Activated T-helper 1 cell treated with anti-CD3 and anti-CD28 coated beads, Interleukin-12 subunit alpha, Interleukin-12 subunit beta, Interleukin-2, Interleukin-4 antibody, amounts not matched to agents 30 ng/mL and 10 ng/mL and 1 ng/mL, durations not matched to agents 14 hours and 24 hours and 36 hours (primary cell): ENCODE measurements at regions of chr1 and their contacts with region 1.

Region 1: DNA sequence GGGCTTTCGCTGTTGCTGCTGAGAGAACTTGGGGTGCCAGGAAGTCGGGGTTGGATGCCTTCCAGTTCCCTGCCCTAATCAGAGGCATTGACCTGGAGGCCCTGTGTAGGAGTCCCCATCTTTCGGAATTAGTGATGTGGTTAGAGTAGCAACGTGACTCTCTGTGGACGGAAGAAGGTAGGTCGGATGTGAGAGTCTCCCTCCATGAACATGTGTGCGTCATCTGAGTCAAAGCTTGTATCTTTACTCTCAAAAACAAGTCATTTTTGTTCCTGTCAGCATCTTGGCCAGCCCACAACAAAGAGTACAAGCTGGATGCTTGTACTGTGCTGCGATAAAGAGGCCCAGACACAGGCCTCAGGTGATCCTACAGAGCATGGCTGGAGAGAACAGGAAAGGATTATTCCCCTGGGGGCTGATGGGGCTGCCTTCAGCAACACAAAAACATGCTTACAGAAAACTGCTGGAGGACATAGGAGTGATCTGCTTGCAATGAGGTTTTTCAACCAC is 31.0 kb upstream of the IL10 start:
- DNase-seq: peak; percentile 81
- H3K4me3 Mint-ChIP-seq: peak overlapping the region; percentile 20
- H3K27ac Mint-ChIP-seq: peak overlapping the region; percentile 83
- H3K4me1 Mint-ChIP-seq: peaks cover 87% of the 10 kb centered on the region
- H3K27me3 Mint-ChIP-seq: peaks cover 30% of the 10 kb centered on the region

Region 2: DNA sequence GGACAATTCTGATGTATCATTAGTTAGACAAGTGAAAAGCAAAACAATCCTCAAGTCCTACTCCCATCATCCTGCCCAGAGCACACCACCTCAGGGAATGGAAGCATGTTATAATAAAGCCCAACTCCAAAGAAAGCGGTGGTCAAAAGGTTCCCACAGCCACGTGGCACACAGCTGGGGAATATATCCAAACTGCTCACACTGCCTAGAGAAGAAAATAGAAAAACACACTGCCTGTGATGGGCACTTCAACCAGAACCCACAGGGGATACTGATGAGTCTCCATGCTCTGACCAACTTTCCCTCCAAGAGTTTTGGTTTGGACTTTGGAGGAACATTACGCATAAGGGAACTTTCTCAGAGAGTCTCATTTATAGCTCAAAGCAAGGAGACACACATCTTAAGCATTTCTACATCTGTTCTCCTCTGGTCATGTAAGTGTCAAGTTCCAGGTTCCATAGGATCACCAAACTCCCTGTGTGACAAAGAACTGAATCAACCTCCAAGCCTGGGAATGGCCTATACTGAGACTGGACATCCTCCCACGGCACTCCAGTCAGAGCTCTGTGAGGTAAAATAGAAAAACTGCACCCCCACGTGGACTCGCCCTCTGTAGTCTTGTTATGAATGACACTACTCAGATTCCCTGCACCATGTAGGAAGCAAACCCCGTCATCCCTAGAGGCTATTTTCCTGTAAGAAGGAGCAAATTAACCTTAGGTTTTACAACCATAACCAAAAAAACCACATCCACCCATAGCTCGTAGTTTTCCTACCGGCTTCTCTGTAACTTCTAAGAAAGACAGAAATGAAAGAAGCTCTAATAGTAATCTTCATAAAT is 1604.0 kb before region 1 on chr1:
- intact Hi-C with region 1: loop called (anchors 1 kb)
- DNase-seq: peak; percentile 29
- H3K4me3 Mint-ChIP-seq: peak overlapping the region; percentile 63
- H3K27ac Mint-ChIP-seq: peak overlapping the region; percentile 94
- H3K4me1 Mint-ChIP-seq: peaks cover 82% of the 10 kb centered on the region
- H3K27me3 Mint-ChIP-seq: no peaks in the 10 kb centered on the region

Region 3: DNA sequence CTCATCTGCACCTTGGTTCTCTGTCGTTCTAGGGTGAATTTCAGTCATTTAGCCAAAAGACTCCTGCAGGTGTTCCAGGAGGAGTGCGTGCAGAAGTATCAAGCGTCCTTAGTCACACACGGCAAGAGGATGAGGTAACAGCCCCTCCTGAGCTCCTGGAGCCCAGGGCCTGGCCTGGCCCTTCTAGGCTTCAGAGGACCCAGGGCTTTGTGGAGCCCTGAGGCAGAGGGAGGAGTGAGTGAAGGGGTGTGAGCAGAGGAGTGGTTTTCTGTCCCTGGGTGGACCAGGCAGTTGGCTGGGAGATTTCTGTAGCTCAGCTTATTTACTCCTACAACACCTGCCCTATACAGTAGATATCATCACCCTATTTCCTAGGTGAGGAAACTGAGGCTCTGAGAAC is 311.7 kb before region 1 on chr1:
- intact Hi-C with region 1: no loop called
- DNase-seq: no peak
- H3K4me3 Mint-ChIP-seq: no peak overlapping the region
- H3K27ac Mint-ChIP-seq: no peak overlapping the region
- H3K4me1 Mint-ChIP-seq: peaks cover 24% of the 10 kb centered on the region
- H3K27me3 Mint-ChIP-seq: no peaks in the 10 kb centered on the region

Region 4: DNA sequence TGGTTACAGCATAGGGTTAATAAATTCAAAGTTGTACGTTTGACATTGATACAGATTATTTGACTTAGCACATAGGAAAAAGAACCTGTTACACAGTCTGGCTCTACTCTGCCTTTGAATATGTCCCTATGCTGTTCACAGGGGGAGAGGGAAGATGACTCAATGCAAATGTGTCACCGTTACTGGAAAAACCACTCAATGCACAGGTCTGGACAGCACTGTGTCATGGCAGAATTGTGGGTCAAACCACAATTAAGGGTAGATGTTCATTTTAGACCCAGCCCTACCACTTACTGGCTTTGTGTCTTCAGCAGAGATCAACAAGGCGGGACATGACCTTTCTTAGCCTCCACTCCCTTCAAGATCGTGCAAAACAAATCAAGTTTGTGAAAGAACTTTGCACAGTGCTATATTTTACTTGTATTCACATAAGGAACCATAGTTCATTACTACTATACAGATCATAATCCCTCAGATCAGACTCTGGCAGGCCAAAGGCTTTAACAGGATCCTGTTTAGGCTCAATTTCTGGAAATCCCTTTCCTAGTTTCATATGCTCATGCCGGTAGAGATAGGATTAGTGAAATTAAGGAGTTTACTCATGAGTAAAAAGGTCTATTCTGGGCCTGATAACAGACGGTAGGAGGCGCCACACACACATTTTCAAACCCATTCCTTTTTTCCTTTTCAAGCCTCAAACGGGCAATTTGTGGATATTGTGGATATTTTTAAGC is 213.1 kb before region 1 on chr1:
- intact Hi-C with region 1: loop called (anchors 2 kb)
- DNase-seq: peak; percentile 70
- H3K4me3 Mint-ChIP-seq: peak overlapping the region; percentile 65
- H3K27ac Mint-ChIP-seq: peak overlapping the region; percentile 95
- H3K4me1 Mint-ChIP-seq: peaks cover 87% of the 10 kb centered on the region
- H3K27me3 Mint-ChIP-seq: no peaks in the 10 kb centered on the region

Region 5: GRCh38 chr1:206766251-206766856 is 36.9 kb before region 1 on chr1:
- intact Hi-C with region 1: loop called (anchors 1 kb)
- DNase-seq: peak; percentile 64
- H3K4me3 Mint-ChIP-seq: peak overlapping the region; percentile 29
- H3K27ac Mint-ChIP-seq: no peak overlapping the region
- H3K4me1 Mint-ChIP-seq: peaks cover 74% of the 10 kb centered on the region
- H3K27me3 Mint-ChIP-seq: peaks cover 34% of the 10 kb centered on the region

Region 6: GRCh38 chr1:206778031-206778430 is 25.2 kb before region 1 on chr1:
- intact Hi-C with region 1: no loop called
- DNase-seq: no peak
- H3K4me3 Mint-ChIP-seq: no peak overlapping the region
- H3K27ac Mint-ChIP-seq: no peak overlapping the region
- H3K4me1 Mint-ChIP-seq: peaks cover 21% of the 10 kb centered on the region
- H3K27me3 Mint-ChIP-seq: peaks cover 31% of the 10 kb centered on the region

Region 7: DNA sequence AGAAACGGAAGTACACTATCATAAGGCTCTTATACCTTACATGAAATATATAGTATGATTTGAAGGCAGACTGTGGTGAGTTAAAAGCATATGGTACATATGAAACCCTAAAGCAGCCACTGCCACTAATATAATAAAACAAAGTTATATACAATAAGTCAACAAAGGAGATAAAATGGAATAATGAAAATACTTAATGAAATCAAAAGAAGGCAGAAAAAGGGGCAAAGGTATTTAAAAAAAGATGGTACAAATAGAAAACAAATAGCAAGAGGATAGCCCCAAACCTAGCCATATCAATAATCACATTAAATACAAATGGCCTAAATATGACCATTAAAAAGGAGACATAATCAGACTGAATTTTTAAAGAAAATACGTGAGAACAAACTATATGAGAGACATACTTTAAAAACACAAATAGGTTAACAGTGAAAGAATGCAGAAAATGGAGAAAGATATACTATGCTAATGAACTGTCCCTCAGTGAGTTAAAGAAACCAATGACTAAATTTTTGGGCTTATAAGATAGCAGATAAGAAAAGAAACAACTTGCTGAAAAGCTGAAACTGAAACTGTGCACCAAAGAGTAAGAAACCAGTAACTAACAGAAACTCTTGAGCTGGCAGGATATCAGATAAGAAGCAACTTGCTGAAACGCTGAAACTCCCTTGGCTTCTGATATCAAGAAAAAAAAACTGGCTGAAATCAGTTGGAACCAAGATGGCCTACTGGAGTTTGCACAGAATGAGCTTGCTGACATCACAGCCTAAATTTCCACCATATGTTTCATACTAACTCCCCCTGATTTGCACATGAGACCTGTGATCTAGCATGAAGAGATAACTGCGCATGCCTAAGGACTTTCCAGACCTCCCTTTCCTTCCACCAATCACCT is 13.4 kb after region 1 on chr1:
- intact Hi-C with region 1: loop called (anchors 1 kb)
- DNase-seq: peak; percentile 41
- H3K4me3 Mint-ChIP-seq: peak overlapping the region; percentile 47
- H3K27ac Mint-ChIP-seq: peak overlapping the region; percentile 88
- H3K4me1 Mint-ChIP-seq: peaks cover 43% of the 10 kb centered on the region
- H3K27me3 Mint-ChIP-seq: no peaks in the 10 kb centered on the region

Region 8: GRCh38 chr1:207414606-207415108 is 611.4 kb after region 1 on chr1:
- intact Hi-C with region 1: loop called (anchors 5 kb)
- DNase-seq: no peak
- H3K4me3 Mint-ChIP-seq: no peak overlapping the region
- H3K27ac Mint-ChIP-seq: peak overlapping the region; percentile 35
- H3K4me1 Mint-ChIP-seq: peaks cover 33% of the 10 kb centered on the region
- H3K27me3 Mint-ChIP-seq: peaks cover 4% of the 10 kb centered on the region